Spleen (tissue), 13 donors: ENCODE measurements at regions of chr2 and their contacts with region 1.

Region 1: DNA sequence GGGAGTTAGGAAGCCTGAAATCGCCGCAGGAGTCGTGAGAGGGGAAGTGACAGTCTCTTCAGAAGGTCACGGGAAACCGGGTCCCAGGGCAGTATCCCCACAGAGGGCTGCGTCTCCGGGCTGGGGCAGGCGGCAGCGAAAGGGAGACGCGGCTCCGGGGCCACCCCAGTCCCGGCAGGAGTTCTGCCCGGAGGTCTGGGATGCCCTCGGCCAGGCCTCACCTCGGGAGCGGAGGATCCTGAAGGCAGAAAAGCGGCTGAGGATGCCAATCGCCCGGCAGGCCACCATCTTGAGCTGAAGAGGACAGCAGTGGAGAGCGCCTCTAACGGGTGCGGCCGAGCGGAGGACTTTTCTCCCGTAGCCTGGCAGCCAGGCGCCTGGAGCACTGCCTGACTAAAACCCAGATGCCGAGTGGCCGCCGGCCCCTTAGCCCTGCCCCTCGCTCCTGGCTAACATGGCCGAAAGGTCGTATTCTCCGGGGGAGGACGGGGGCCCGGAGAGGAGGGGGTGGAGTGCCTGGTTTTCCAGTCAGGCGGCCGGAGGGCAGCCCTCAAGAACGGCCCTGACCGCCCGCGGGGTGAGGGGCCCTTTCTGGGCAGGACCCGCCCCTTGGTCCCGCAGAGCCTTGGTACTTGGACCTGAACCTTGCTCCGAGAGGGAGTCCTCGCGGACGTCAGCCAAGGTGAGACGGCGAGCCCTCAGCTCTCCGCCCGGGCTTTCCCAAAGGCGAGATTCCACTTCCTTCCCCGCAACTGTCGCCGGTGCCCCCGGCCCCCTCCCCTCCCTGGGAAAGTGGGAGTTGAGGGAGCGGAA is at the starts of genes HADHA and HADHB:
- DNase-seq: peak; percentile 97
- H3K4me3 ChIP-seq: peak within 1 kb of the TSS; percentile 73 to 95 (median 87)
- H3K27ac ChIP-seq: peak within 1 kb of the TSS; percentile 93 to 99 (median 96)
- H3K4me1 ChIP-seq: peaks cover 15 to 89% (median 79%) of the 10 kb centered on the region in 6 donors
- H3K27me3 ChIP-seq: no peaks in the 10 kb centered on the region
- CTCF ChIP-seq: peak in 9 of 11 experiments; percentile 36 to 70 (median 40)
- POLR2A ChIP-seq: peak; percentile 56 to 59 (median 58)
- total RNA-seq, gene HADHA: 114 to 134 (median 115) TPM
- total RNA-seq, gene HADHB: 106 to 165 (median 130) TPM

Region 2: DNA sequence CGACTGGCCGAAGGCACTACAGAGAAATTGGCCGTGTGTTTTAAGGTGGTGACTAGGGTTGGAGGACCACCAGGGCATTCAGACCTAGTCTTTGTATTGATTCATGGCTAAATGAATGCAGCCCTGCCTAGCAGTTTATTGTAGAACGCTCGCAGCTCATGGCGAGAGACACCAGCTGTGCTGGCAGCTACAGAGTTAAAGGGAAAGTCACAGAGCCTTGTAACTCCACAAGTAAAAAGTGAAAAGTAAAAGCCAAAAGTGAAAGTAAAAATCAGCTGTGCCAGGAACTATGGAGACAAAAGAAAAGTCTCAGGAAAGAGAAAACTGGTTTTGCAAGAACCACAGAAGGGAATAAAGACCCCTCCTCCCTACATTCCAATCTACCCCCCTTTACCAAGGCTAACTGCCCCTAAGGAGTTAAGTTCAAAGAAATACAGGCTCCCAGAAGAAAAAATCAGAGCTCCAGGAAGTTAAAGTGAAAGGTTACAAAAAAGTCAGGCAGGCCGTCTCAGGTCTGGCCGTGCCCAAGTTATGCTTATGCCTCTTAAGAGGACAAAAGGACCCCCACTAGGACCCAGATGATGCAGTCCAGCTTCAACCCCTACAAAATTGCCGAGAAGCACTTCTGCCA is 55.1 kb after region 1 on chr2:
- intact Hi-C with region 1: loop called (anchors 10 kb)
- DNase-seq: no peak
- H3K4me3 ChIP-seq: peak overlapping the region; percentile 40 to 77 (median 60)
- H3K27ac ChIP-seq: peak overlapping the region; percentile 48 to 93 (median 88)
- H3K4me1 ChIP-seq: peaks cover 0 to 47% (median 30%) of the 10 kb centered on the region in 6 donors
- H3K27me3 ChIP-seq: no peaks in the 10 kb centered on the region
- CTCF ChIP-seq: no peak
- POLR2A ChIP-seq: no peak

Region 3: GRCh38 chr2:26316041-26316440 is 71.5 kb after region 1 on chr2:
- intact Hi-C with region 1: no loop called
- DNase-seq: no peak
- H3K4me3 ChIP-seq: no peak overlapping the region
- H3K27ac ChIP-seq: no peak overlapping the region
- H3K4me1 ChIP-seq: no peaks in the 10 kb centered on the region
- H3K27me3 ChIP-seq: no peaks in the 10 kb centered on the region
- CTCF ChIP-seq: no peak
- POLR2A ChIP-seq: no peak